Mammary epithelial cell (primary cell): ENCODE measurements at regions of chr5 and their contacts with region 1.

Region 1: DNA sequence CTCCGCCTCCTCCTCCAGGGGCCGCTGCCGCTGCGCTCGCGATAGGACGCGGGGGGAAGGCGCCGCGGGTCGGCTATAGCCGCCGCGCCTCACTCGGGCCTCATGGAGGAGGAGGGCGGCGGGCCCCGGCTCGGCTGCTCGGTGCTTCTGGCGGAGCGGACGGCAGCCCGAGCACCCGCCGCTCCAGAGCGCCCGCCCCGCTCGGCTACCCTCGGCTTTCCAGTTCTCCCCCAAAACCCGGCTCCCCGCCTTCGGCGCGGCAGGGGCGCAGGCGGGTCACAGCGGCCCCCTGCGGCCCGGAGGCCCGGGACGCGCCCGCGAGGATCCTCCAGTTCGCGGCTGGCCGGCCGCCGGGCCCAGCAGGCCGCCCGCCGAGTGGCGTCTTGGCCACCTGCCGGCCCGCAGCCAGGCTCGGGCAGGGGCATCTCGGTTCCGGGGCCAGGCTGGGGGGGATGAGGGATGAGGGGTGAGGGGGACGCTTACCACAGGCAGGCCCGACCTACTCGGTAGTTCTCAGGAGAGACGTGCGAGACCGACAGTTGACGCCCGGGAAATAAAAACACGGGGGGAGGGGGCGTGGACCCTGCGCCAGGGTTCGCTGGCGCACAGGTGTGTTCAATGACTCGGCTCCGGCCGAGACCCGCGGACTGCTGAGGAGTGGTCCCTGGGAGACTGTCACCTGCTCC is at the start of gene PAIP1:
- DNase-seq: peak; percentile 90
- H3K4me3 ChIP-seq: peak within 1 kb of the TSS; percentile 75 to 88 (median 81)
- H3K27ac ChIP-seq: peak within 1 kb of the TSS; percentile 75
- H3K4me1 ChIP-seq: peaks cover 11% of the 10 kb centered on the region
- H3K27me3 ChIP-seq: no peaks in the 10 kb centered on the region
- CTCF ChIP-seq: peak; percentile 34 to 38
- total RNA-seq, gene PAIP1: 76.4 to 103 TPM

Region 2: DNA sequence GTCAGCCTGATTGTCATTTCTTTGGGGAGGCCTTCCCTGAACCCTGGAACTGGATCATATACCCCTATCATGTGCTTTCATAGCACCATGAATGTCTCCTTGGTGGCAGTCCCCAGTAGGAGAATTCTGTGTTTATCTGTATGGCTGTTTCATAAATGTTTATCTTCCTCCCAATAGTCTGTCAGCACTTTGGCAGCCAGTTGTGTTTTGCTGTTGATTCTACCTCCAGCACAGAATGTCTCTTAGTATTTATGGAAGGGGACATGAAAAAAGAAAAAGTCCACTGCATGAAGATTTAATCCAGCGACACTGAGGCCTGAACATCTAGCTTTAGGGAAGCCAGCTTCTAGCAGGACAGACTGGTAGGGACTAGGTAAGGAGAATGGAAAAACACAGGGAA is 1095.5 kb before region 1 on chr5:
- CTCF ChIA-PET with region 1: no interaction called
- dilution Hi-C with region 1: no loop called
- in situ Hi-C with region 1: no loop called
- intact Hi-C with region 1: no loop called
- DNase-seq: no peak
- H3K4me3 ChIP-seq: no peak overlapping the region
- H3K27ac ChIP-seq: no peak overlapping the region
- H3K4me1 ChIP-seq: no peaks in the 10 kb centered on the region
- H3K27me3 ChIP-seq: no peaks in the 10 kb centered on the region
- CTCF ChIP-seq: no peak

Region 3: GRCh38 chr5:43523662-43524072 is 33.3 kb before region 1 on chr5:
- CTCF ChIA-PET with region 1: no interaction called
- dilution Hi-C with region 1: loop called (anchors 5 kb)
- in situ Hi-C with region 1: no loop called
- intact Hi-C with region 1: no loop called
- DNase-seq: no peak
- H3K4me3 ChIP-seq: no peak overlapping the region
- H3K27ac ChIP-seq: no peak overlapping the region
- H3K4me1 ChIP-seq: no peaks in the 10 kb centered on the region
- H3K27me3 ChIP-seq: no peaks in the 10 kb centered on the region
- CTCF ChIP-seq: no peak

Region 4: GRCh38 chr5:43602461-43603343 is 45.7 kb after region 1 on chr5 and contains the start of gene NNT:
- CTCF ChIA-PET with region 1: interaction called, 3 read pairs
- dilution Hi-C with region 1: no loop called
- in situ Hi-C with region 1: no loop called
- intact Hi-C with region 1: loop called (anchors 2 kb)
- DNase-seq: peak; percentile 47
- H3K4me3 ChIP-seq: peak within 1 kb of the TSS; percentile 66 to 93 (median 80)
- H3K27ac ChIP-seq: peak within 1 kb of the TSS; percentile 58
- H3K4me1 ChIP-seq: peaks cover 14% of the 10 kb centered on the region
- H3K27me3 ChIP-seq: no peaks in the 10 kb centered on the region
- CTCF ChIP-seq: no peak
- total RNA-seq, gene NNT: 77.8 to 83.2 TPM

Region 5: DNA sequence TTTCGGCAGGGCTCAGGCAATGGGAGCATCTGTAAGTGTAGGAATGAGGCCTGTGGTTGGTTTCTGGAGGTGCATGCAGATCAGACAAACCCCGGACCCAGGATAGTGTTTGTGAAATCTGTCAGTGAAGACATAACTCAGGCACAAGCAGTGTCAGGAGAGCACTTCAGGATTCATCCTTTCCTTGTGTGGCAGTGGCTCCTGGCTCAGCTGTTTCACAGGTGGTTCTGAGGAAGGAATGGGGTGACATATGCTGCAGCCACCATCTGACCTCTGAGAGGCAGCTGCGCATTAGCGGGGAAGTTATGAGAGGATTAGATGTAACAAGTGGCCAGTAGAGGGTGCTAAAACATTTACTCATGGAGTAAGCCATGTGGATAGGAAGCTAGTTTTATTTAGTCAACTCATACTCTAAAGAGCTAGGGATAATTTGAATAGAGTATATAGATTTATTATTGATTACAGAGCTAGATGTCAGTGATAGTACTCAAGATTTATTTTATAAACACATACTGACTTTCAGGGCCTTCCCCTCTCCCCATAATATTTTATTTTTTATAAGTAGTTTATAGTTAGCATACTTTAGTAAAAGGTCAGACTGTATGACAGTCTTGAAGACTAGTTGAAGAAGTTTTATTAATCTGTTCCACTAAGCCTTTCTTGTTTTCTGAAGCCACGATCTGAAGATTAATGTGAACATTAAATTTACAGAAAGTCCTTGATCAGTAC is 74.3 kb after region 1 on chr5:
- CTCF ChIA-PET with region 1: interaction called, 7 read pairs
- dilution Hi-C with region 1: no loop called
- in situ Hi-C with region 1: no loop called
- intact Hi-C with region 1: loop called (anchors 2 kb)
- DNase-seq: peak; percentile 59
- H3K4me3 ChIP-seq: no peak overlapping the region
- H3K27ac ChIP-seq: no peak overlapping the region
- H3K4me1 ChIP-seq: peaks cover 4% of the 10 kb centered on the region
- H3K27me3 ChIP-seq: no peaks in the 10 kb centered on the region
- CTCF ChIP-seq: peak; percentile 62 to 65